ENCODE measurements at regions of chr16 and their contacts with region 1.

Region 1: GRCh38 chr16:35931722-35932121 is 2472.3 kb downstream of the TP53TG3F start:
- H3K4me3 Mint-ChIP-seq: no peak overlapping the region
- H3K27ac Mint-ChIP-seq: no peak overlapping the region
- H3K4me1 Mint-ChIP-seq: no peaks in the 10 kb centered on the region
- H3K27me3 Mint-ChIP-seq: no peaks in the 10 kb centered on the region

Region 2: DNA sequence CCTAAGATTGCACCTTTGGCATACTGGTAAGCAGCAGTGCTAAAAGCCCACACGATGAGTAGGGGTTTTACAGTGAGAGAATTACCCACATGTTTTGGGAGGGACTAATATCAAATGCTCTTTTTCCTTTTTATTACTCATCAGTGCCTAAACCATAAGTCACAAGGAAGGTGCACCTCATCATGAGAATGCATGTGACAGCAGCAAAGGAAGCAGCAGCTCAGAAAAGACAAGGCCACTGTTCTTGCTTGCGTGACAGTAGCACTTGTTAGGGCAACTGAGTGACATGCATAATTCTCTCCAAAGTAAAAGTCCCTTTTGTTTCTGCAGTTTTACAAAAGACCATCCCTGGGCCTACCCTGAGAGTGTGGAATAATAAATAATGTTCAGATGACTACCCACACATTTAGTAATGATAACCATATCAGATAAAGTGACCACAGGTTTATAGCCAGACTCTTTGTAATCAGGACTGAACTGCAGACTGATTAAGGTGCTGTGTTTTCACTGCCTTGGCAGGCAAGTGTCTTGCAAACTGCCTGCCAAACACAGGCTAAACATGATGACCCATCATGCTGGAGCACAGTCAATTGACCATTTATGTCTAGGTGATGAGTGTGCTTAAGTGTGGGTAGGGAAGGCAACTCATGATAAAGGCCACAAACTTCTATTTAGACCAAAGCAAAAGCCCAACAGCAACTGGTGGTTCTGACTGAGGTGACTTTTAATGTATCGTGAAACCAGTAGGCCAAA is 720.9 kb before region 1 on chr16:
- intact Hi-C with region 1: no loop called
- H3K4me3 Mint-ChIP-seq: no peak overlapping the region
- H3K27ac Mint-ChIP-seq: no peak overlapping the region
- H3K4me1 Mint-ChIP-seq: no peaks in the 10 kb centered on the region
- H3K27me3 Mint-ChIP-seq: no peaks in the 10 kb centered on the region

Region 3: DNA sequence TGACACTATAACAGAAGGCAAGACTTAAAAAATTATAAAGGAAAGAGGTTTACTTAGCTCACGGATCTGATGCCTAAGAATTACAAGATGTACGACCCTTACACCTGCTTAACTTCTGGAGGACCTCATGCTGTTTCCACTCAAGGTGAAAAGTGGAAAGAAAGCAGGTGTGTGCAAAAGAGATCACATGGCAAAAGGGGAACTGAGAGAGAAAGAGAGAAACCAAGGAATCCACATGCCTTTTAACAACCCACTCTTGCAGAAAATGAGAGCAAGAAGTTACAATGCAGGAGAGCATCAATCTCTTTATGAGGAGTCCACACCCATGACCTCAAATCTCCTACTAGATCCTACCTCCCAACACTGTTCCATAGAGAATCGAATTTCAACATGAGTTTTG is 90.1 kb before region 1 on chr16:
- intact Hi-C with region 1: no loop called
- H3K4me3 Mint-ChIP-seq: no peak overlapping the region
- H3K27ac Mint-ChIP-seq: no peak overlapping the region
- H3K4me1 Mint-ChIP-seq: no peaks in the 10 kb centered on the region
- H3K27me3 Mint-ChIP-seq: no peaks in the 10 kb centered on the region

Region 4: GRCh38 chr16:35862242-35862641 is 69.5 kb before region 1 on chr16:
- intact Hi-C with region 1: no loop called
- H3K4me3 Mint-ChIP-seq: no peak overlapping the region
- H3K27ac Mint-ChIP-seq: no peak overlapping the region
- H3K4me1 Mint-ChIP-seq: no peaks in the 10 kb centered on the region
- H3K27me3 Mint-ChIP-seq: no peaks in the 10 kb centered on the region

Region 5: GRCh38 chr16:35881654-35882053 is 50.1 kb before region 1 on chr16:
- intact Hi-C with region 1: loop called (anchors 10 kb)
- H3K4me3 Mint-ChIP-seq: no peak overlapping the region
- H3K27ac Mint-ChIP-seq: no peak overlapping the region
- H3K4me1 Mint-ChIP-seq: no peaks in the 10 kb centered on the region
- H3K27me3 Mint-ChIP-seq: no peaks in the 10 kb centered on the region

Region 6: DNA sequence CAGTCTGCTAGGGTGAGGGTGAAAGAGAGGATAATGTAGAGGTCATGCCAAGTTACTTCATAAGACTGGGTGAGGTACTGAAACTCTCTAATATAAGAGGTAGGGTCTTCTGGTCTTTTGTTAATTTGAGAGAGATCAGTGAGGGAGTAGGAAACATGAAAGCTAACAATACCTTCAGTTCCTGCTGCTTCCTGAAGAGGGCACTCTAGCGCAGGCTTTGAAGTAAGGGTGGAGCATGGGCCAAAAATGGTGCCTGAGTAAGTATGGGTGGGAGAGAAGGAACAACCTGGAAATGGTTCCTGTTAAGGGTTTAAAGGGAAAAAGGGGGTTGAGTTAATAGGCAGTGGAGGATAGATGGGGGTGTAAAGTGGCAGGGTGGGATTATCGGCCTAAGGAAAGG is 22.8 kb before region 1 on chr16:
- intact Hi-C with region 1: loop called (anchors 5 kb)
- H3K4me3 Mint-ChIP-seq: no peak overlapping the region
- H3K27ac Mint-ChIP-seq: no peak overlapping the region
- H3K4me1 Mint-ChIP-seq: no peaks in the 10 kb centered on the region
- H3K27me3 Mint-ChIP-seq: no peaks in the 10 kb centered on the region

Measured in dendritic cell treated with granulocyte-macrophage colony-stimulating factor and Interleukin-4, amounts not matched to agents 40 ng/mL and 50 ng/mL, for 4 days (primary cell).